Psoas muscle (tissue), 8 donors: ENCODE measurements at regions of chr11 and their contacts with region 1.

Region 1: GRCh38 chr11:117946842-117947526 is 17.8 kb upstream of the TMPRSS13 start:
- DNase-seq: peak; percentile 87 to 94
- ATAC-seq: peak; percentile 94 to 98 (median 96)
- H3K4me3 ChIP-seq: no peak overlapping the region
- H3K27ac ChIP-seq: no peak overlapping the region
- H3K4me1 ChIP-seq: no peaks in the 10 kb centered on the region
- H3K27me3 ChIP-seq: peaks cover 0 to 14% (median 1%) of the 10 kb centered on the region in 3 donors
- CTCF ChIP-seq: peak; percentile 96

Region 2: GRCh38 chr11:117426269-117426685 is 520.7 kb before region 1 on chr11:
- intact Hi-C with region 1: loop called (anchors 5 to 10 kb)
- DNase-seq: peak; percentile 62 to 79
- ATAC-seq: peak; percentile 49 to 71 (median 59)
- H3K4me3 ChIP-seq: no peak overlapping the region
- H3K27ac ChIP-seq: no peak overlapping the region
- H3K4me1 ChIP-seq: no peaks in the 10 kb centered on the region
- H3K27me3 ChIP-seq: peaks cover 0 to 4% (median 2%) of the 10 kb centered on the region in 3 donors
- CTCF ChIP-seq: peak; percentile 89

Region 3: DNA sequence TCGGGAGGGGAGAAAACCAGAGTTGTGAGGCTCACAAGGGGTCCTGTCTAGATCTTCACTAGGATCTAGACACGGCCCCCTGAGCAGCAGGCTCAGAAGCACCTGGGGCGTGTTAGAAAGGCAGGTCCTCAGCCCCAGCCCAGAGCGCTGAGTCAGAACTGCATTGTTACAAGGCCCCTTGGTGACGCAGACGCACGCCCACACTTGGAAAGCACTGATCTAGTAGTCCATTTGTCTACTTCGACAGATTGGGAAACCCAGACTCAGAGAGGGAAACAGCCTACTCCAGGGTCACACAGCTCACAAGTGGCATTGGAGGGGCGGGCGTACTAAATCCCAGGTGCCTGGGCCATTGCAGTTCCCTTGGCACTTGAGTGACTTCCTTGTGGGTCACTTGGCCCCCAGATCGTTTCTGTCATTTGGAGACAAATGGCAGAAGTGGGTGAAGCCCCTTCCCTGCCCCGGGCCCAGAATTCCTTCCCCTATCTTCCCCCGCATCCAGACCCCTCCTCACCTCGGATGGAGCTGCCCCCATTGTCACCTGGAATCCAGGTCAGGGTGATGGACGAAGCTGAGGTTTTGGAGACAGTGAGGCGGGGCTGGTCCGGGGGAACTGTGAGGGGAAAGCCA is 508.5 kb before region 1 on chr11:
- intact Hi-C with region 1: loop called in 1 of 2 experiments (anchors 10 kb)
- DNase-seq: no peak
- ATAC-seq: no peak
- H3K4me3 ChIP-seq: no peak overlapping the region
- H3K27ac ChIP-seq: no peak overlapping the region
- H3K4me1 ChIP-seq: no peaks in the 10 kb centered on the region
- H3K27me3 ChIP-seq: peaks cover 0 to 34% (median 1%) of the 10 kb centered on the region in 3 donors
- CTCF ChIP-seq: no peak

Region 4: DNA sequence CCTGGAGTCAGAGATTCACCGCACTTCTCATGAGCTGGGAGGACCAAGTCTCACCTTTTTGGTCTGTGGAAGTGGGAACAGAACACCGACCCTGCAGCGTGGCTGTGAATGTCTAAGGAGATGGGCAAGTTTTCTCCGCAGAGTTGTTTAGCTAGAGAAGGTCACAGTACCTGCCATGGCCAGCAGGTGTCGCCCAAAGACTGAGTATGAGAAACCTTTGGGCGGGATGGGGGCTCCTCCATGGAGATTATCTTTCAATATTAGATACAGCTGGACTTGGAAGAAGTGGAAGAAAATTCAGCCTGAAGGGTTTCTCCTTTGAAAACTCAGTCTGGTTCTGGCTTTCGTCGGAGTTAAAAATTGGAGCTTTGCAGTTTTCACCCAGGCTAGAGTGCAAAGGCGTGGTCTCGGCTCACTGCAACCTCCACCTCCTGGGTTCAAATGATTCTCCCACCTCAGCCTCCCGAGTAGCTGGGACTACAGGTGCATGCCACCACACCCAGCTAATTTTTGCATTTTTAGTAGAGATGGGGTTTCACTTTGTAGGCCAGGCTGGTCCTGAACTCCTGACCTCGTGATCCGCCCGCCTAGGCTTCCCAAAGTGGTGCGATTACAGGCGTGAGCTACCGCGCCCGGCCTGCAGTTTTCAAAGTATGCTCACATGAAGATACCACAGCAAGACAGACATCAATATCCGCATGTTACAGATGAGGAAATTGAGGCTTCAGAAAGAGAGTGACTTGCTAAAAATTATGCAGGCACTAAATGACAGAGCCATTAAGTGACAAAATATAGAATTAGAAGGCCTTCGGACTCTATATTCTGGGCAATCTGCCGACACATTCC is 139.3 kb before region 1 on chr11:
- intact Hi-C with region 1: loop called (anchors 2 to 5 kb)
- DNase-seq: peak; percentile 74 to 84
- ATAC-seq: peak; percentile 70 to 79 (median 75)
- H3K4me3 ChIP-seq: no peak overlapping the region
- H3K27ac ChIP-seq: no peak overlapping the region
- H3K4me1 ChIP-seq: no peaks in the 10 kb centered on the region
- H3K27me3 ChIP-seq: peaks cover 0 to 10% (median 0%) of the 10 kb centered on the region in 3 donors
- CTCF ChIP-seq: peak; percentile 93

Region 5: GRCh38 chr11:117843666-117844484 is 103.1 kb before region 1 on chr11:
- intact Hi-C with region 1: loop called (anchors 1 to 2 kb)
- DNase-seq: peak; percentile 77 to 87
- ATAC-seq: peak; percentile 82 to 92 (median 83)
- H3K4me3 ChIP-seq: no peak overlapping the region
- H3K27ac ChIP-seq: no peak overlapping the region
- H3K4me1 ChIP-seq: no peaks in the 10 kb centered on the region
- H3K27me3 ChIP-seq: no peaks in the 10 kb centered on the region
- CTCF ChIP-seq: peak; percentile 99

Region 6: DNA sequence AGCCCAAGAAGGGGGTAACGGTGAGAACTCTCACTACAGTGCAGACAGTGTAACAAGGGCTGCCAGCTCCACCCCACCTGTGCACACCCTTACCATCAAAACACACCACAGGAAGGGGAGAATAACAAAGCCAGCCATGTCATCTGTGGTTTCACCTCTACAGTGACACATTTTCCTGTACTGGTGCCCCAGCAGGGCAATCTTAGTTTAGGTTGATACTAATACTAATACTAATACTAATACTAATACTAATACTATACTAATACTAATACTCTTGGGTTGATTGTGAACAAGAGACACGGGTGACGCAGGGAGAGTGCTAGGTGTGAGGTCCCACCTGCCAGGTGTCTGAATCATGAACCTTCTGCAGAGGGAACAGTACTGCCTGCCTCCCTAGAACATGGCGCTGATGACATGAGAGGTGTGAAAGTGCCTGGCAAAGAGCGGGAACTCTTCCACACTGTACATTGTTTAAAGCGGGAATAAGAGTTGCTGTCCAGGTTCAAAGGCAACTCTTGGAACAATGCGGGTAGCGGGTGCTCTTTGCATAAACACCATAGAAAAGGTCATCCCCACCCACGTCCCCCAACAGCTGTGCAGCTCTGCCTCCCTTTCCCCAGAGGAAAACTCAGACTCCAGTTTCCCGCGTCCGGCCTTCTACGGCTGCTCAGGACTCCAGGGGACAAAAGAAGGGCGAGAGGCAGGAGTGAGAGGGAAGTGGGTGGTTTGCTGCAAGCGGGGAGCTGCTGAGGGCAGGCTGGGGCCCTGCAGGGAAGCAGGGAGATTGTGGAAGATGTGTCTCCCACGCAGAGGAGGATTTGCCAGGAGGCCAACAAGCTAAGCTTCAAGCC is 104.9 kb after region 1 on chr11:
- intact Hi-C with region 1: loop called in 1 of 2 experiments (anchors 5 kb)
- DNase-seq: peak in 1 of 2 donors; percentile 38
- ATAC-seq: no peak
- H3K4me3 ChIP-seq: no peak overlapping the region
- H3K27ac ChIP-seq: no peak overlapping the region
- H3K4me1 ChIP-seq: no peaks in the 10 kb centered on the region
- H3K27me3 ChIP-seq: no peaks in the 10 kb centered on the region
- CTCF ChIP-seq: no peak